Activated T-helper 1 cell treated with anti-CD3 and anti-CD28 coated beads, Interleukin-12 subunit alpha, Interleukin-12 subunit beta, Interleukin-2, Interleukin-4 antibody, amounts not matched to agents 30 ng/mL and 10 ng/mL and 1 ng/mL, durations not matched to agents 14 hours and 24 hours and 36 hours (primary cell): ENCODE measurements at regions of chr10 and their contacts with region 1.

Region 1: GRCh38 chr10:16195178-16195769 is 241.5 kb upstream of the PTER start:
- DNase-seq: peak; percentile 8
- H3K4me3 Mint-ChIP-seq: peak overlapping the region; percentile 16
- H3K27ac Mint-ChIP-seq: peak overlapping the region; percentile 3
- H3K4me1 Mint-ChIP-seq: peaks cover 31% of the 10 kb centered on the region
- H3K27me3 Mint-ChIP-seq: peaks cover 2% of the 10 kb centered on the region

Region 2: GRCh38 chr10:16529853-16530252 is 334.6 kb after region 1 on chr10:
- intact Hi-C with region 1: loop called (anchors 10 kb)
- DNase-seq: no peak
- H3K4me3 Mint-ChIP-seq: no peak overlapping the region
- H3K27ac Mint-ChIP-seq: no peak overlapping the region
- H3K4me1 Mint-ChIP-seq: no peaks in the 10 kb centered on the region
- H3K27me3 Mint-ChIP-seq: peaks cover 21% of the 10 kb centered on the region

Region 3: DNA sequence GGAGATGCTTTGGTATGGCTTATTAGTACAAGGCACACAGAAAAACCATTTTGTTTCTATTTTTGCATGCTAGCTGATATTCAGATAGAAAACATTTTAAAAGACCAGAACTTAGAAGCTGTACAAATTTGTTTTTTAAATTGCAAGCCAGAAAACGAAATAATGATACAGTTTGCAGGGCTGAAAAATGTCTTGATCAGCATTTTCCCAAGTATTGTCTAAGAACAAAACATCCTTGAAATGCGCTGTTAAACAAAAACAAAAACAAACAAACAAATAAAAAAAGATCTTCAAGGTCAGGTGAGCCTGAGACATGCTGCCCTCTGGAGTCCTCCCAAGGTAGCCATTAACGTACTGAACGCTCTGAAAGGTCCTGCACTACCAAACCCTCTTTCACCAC is 1131.1 kb after region 1 on chr10:
- intact Hi-C with region 1: no loop called
- DNase-seq: no peak
- H3K4me3 Mint-ChIP-seq: no peak overlapping the region
- H3K27ac Mint-ChIP-seq: no peak overlapping the region
- H3K4me1 Mint-ChIP-seq: no peaks in the 10 kb centered on the region
- H3K27me3 Mint-ChIP-seq: peaks cover 5% of the 10 kb centered on the region